ENCODE measurements at regions of chr4 and their contacts with region 1.

Region 1: DNA sequence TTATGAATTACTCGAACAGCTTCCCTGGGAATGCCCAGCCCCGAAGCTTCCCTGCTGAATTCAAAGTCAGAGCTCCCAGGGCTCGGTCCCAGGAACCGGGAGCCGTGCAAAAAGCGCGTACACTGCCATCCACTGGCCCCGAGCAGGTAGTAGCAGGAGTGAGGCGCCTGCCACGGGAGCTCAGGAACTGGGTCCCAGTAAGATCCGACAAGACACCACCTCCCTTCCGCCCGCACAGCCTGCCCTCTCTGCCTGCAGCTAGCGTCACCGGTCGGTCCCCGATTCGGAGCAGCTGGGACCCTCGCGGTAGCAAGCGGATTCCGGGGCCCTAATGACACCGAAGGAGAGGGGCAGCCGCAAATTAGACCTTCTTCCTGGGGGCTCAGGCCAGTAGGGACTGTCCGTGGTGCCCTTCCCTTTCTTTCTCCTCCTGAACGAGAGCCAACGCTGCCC is 1.2 kb downstream of the CORIN start:
- DNase-seq: peak; percentile 88
- H3K4me3 ChIP-seq: peak overlapping the region; percentile 60 to 67
- H3K27ac ChIP-seq: peak overlapping the region in 1 of 2 experiments; percentile 43; a peak in 1 of 4 replicates
- H3K4me1 ChIP-seq: peaks cover 0 to 9% of the 10 kb centered on the region in 2 experiments; a peak in 2 of 4 replicates
- H3K27me3 ChIP-seq: no peaks in the 10 kb centered on the region
- CTCF ChIP-seq: peak; percentile 74
- EP300 ChIP-seq: no peak
- RAD21 ChIP-seq: peak; percentile 93

Region 2: GRCh38 chr4:47662975-47663374 is 173.7 kb before region 1 on chr4:
- CTCF ChIA-PET with region 1: interaction called, 58 read pairs
- POLR2A ChIA-PET with region 1: no interaction called
- DNase-seq: no peak
- H3K4me3 ChIP-seq: no peak overlapping the region
- H3K27ac ChIP-seq: no peak overlapping the region
- H3K4me1 ChIP-seq: no peaks in the 10 kb centered on the region
- H3K27me3 ChIP-seq: no peaks in the 10 kb centered on the region
- CTCF ChIP-seq: peak; percentile 55
- EP300 ChIP-seq: no peak
- RAD21 ChIP-seq: no peak

Region 3: GRCh38 chr4:47686294-47686872 is 150.3 kb before region 1 on chr4:
- CTCF ChIA-PET with region 1: interaction called, 19 read pairs
- POLR2A ChIA-PET with region 1: no interaction called
- DNase-seq: peak; percentile 42
- H3K4me3 ChIP-seq: no peak overlapping the region; a peak in 1 of 4 replicates
- H3K27ac ChIP-seq: no peak overlapping the region
- H3K4me1 ChIP-seq: no peaks in the 10 kb centered on the region
- H3K27me3 ChIP-seq: no peaks in the 10 kb centered on the region
- CTCF ChIP-seq: peak; percentile 66
- EP300 ChIP-seq: no peak
- RAD21 ChIP-seq: peak; percentile 61

Region 4: DNA sequence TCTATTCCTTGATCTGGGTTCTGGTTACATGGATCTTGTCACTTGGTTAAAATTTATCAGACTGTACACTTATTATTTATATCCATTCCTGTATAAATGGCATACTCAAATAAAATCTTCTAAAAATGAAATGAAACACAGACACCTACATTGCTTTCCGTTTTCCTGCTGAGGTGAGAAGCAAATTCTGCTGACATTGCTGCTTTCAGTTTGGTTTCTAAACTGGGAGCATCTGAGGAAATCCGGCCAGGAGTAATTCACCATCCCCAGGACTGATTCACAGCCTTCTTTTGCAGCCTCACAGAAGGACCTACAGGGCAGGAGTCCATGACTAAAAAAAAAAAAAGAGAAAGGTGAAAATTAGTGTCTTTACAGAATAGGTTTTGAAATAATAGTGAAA is 92.4 kb before region 1 on chr4:
- CTCF ChIA-PET with region 1: interaction called, 21 read pairs
- POLR2A ChIA-PET with region 1: no interaction called
- DNase-seq: no peak
- H3K4me3 ChIP-seq: no peak overlapping the region
- H3K27ac ChIP-seq: no peak overlapping the region; a peak in 1 of 4 replicates
- H3K4me1 ChIP-seq: peaks cover 2 to 3% of the 10 kb centered on the region in 2 experiments; a peak in 2 of 4 replicates
- H3K27me3 ChIP-seq: no peaks in the 10 kb centered on the region
- CTCF ChIP-seq: no peak
- EP300 ChIP-seq: no peak
- RAD21 ChIP-seq: no peak

Region 5: DNA sequence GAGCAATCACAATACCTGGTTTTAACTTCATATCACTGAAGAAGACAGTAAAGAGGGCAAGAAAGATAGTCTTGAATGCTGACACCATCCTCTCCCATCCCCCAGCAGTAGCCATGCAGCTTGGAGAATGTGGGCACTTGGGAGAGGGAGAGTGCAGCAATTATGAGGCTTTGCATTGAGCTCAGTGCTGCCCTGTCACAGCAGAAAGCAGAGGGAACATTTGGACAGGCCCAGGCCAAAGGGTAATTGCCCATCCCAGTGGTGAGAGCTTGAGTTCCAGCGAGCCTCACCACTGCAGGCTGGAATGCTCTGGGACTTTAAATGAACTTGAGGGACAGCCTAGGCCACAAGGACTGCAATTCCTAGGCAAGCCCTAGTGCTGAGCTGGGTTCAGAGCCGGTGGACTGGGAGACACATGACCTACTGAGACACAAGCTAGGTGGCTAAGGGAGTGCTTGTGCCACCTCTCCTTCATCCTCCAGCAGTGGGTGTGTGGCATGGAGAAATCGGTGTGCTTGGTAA is 35.1 kb before region 1 on chr4:
- CTCF ChIA-PET with region 1: interaction called, 13 read pairs
- POLR2A ChIA-PET with region 1: no interaction called
- DNase-seq: no peak
- H3K4me3 ChIP-seq: no peak overlapping the region
- H3K27ac ChIP-seq: no peak overlapping the region
- H3K4me1 ChIP-seq: no peaks in the 10 kb centered on the region
- H3K27me3 ChIP-seq: no peaks in the 10 kb centered on the region
- CTCF ChIP-seq: no peak
- EP300 ChIP-seq: no peak
- RAD21 ChIP-seq: no peak

Region 6: GRCh38 chr4:47933840-47934239 is 97.2 kb after region 1 on chr4:
- CTCF ChIA-PET with region 1: interaction called, 73 read pairs
- POLR2A ChIA-PET with region 1: no interaction called
- DNase-seq: peak; percentile 36
- H3K4me3 ChIP-seq: no peak overlapping the region; a peak in 1 of 4 replicates
- H3K27ac ChIP-seq: no peak overlapping the region
- H3K4me1 ChIP-seq: peaks cover 11 to 15% of the 10 kb centered on the region in 2 experiments
- H3K27me3 ChIP-seq: no peaks in the 10 kb centered on the region
- CTCF ChIP-seq: peak; percentile 78
- EP300 ChIP-seq: no peak
- RAD21 ChIP-seq: peak; percentile 86

Region 7: GRCh38 chr4:47990145-47990544 is 153.5 kb after region 1 on chr4:
- CTCF ChIA-PET with region 1: no interaction called
- POLR2A ChIA-PET with region 1: no interaction called
- DNase-seq: no peak
- H3K4me3 ChIP-seq: no peak overlapping the region
- H3K27ac ChIP-seq: no peak overlapping the region
- H3K4me1 ChIP-seq: no peaks in the 10 kb centered on the region
- H3K27me3 ChIP-seq: no peaks in the 10 kb centered on the region
- CTCF ChIP-seq: no peak
- EP300 ChIP-seq: no peak
- RAD21 ChIP-seq: no peak

Region 8: GRCh38 chr4:48223633-48224295 is 387.1 kb after region 1 on chr4:
- CTCF ChIA-PET with region 1: no interaction called
- POLR2A ChIA-PET with region 1: no interaction called
- DNase-seq: no peak
- H3K4me3 ChIP-seq: no peak overlapping the region
- H3K27ac ChIP-seq: no peak overlapping the region
- H3K4me1 ChIP-seq: no peaks in the 10 kb centered on the region; a peak in 1 of 4 replicates
- H3K27me3 ChIP-seq: no peaks in the 10 kb centered on the region
- CTCF ChIP-seq: no peak
- EP300 ChIP-seq: peak in 1 of 2 experiments; percentile 52; a peak in 1 of 4 replicates
- RAD21 ChIP-seq: no peak

Measured in SK-N-SH (cell line).